ENCODE measurements at regions of chr18 and their contacts with region 1.

Region 1: GRCh38 chr18:50287441-50288347 is at the start of gene CXXC1:
- DNase-seq: peak; percentile 98
- H3K4me3 Mint-ChIP-seq: peak within 1 kb of the TSS; percentile 96
- H3K27ac Mint-ChIP-seq: peak within 1 kb of the TSS; percentile 94
- H3K4me1 Mint-ChIP-seq: peaks cover 29% of the 10 kb centered on the region
- H3K27me3 Mint-ChIP-seq: no peaks in the 10 kb centered on the region
- total RNA-seq, gene CXXC1: 102 and 105 TPM in 2 replicates

Region 2: GRCh38 chr18:49486953-49487710 is 800.6 kb before region 1 on chr18 and contains the start of gene C18orf32:
- intact Hi-C with region 1: loop called (anchors 1 kb)
- DNase-seq: peak; percentile 98
- H3K4me3 Mint-ChIP-seq: peak within 1 kb of the TSS; percentile 89
- H3K27ac Mint-ChIP-seq: peak within 1 kb of the TSS; percentile 94
- H3K4me1 Mint-ChIP-seq: peaks cover 42% of the 10 kb centered on the region
- H3K27me3 Mint-ChIP-seq: no peaks in the 10 kb centered on the region
- total RNA-seq, gene C18orf32: 20.4 and 26.1 TPM in 2 replicates

Region 3: DNA sequence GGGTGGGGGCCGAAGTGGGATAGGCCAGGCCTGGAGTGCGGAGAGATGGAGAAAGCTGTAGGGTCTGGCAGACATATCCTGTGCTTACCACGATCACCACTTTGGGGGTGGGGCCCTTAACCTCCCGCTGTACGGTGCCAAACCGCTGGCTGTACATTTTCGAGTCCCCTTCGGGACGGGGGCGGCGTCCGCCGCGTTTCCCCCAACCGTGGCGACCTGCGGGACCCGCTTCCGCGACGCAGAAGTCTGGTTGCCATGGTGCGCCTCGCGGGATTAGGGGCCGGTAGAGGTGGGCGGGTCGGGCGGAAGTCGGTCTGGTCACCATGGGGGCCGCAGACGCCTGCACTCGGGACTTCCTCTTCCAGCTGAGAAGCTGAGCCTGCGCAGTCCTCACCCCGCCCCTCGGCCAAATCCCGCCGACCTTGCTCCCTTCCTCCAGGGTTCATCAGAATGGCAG is 21.4 kb before region 1 on chr18 and contains the start of gene CFAP53:
- intact Hi-C with region 1: loop called (anchors 1 kb)
- DNase-seq: peak; percentile 95
- H3K4me3 Mint-ChIP-seq: peak within 1 kb of the TSS; percentile 83
- H3K27ac Mint-ChIP-seq: peak within 1 kb of the TSS; percentile 78
- H3K4me1 Mint-ChIP-seq: peaks cover 20% of the 10 kb centered on the region
- H3K27me3 Mint-ChIP-seq: peaks cover 6% of the 10 kb centered on the region
- total RNA-seq, gene CFAP53: 0.38 and 0.63 TPM in 2 replicates

Region 4: GRCh38 chr18:50307738-50308470 is 20.2 kb after region 1 on chr18:
- intact Hi-C with region 1: loop called (anchors 1 kb)
- DNase-seq: peak; percentile 97
- H3K4me3 Mint-ChIP-seq: peak overlapping the region; percentile 95
- H3K27ac Mint-ChIP-seq: peak overlapping the region; percentile 86
- H3K4me1 Mint-ChIP-seq: peaks cover 13% of the 10 kb centered on the region
- H3K27me3 Mint-ChIP-seq: peaks cover 25% of the 10 kb centered on the region

Region 5: DNA sequence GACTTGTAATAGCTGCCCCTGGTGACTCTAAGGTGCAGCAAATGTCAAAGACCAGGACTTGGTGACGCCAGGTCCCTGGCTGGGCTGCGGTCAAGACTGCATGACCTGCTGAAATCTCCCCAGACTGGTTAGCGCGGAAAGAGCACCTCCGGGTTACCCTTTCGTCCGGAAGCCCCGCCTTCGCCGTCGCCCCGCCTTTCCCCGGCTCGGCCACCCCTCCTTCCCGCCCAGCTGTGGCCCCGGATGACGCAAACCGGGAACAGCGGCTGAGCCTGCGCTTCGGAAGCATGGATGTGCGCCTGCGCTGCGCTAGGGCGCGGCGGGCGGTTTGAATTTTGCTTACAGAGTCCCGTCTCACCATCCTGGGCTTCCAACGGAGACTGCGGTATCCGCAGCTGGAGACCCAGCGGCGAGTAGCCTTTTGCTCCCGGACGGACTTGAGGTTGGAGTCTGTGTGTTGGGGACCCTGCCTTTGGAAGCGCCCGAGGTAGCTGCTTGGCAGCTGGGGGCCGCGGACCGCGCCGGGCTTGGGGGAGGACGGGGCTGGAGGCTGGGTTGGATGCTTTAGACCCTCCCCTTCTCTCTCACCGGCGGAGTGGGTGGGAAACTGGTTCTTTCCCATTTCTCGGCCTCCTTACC is 87.2 kb after region 1 on chr18 and contains the start of gene SKA1:
- intact Hi-C with region 1: loop called (anchors 1 kb)
- DNase-seq: peak; percentile 98
- H3K4me3 Mint-ChIP-seq: peak within 1 kb of the TSS; percentile 90
- H3K27ac Mint-ChIP-seq: peak within 1 kb of the TSS; percentile 89
- H3K4me1 Mint-ChIP-seq: peaks cover 15% of the 10 kb centered on the region
- H3K27me3 Mint-ChIP-seq: peaks cover 6% of the 10 kb centered on the region
- total RNA-seq, gene SKA1: 20.0 and 22.1 TPM in 2 replicates

Region 6: GRCh38 chr18:51029694-51030536 is 742.2 kb after region 1 on chr18 and contains the start of gene SMAD4:
- intact Hi-C with region 1: loop called (anchors 10 kb)
- DNase-seq: peak; percentile 99
- H3K4me3 Mint-ChIP-seq: peak within 1 kb of the TSS; percentile 97
- H3K27ac Mint-ChIP-seq: peak within 1 kb of the TSS; percentile 99
- H3K4me1 Mint-ChIP-seq: peaks cover 44% of the 10 kb centered on the region
- H3K27me3 Mint-ChIP-seq: no peaks in the 10 kb centered on the region
- total RNA-seq, gene SMAD4: 76.5 and 90.8 TPM in 2 replicates

Region 7: DNA sequence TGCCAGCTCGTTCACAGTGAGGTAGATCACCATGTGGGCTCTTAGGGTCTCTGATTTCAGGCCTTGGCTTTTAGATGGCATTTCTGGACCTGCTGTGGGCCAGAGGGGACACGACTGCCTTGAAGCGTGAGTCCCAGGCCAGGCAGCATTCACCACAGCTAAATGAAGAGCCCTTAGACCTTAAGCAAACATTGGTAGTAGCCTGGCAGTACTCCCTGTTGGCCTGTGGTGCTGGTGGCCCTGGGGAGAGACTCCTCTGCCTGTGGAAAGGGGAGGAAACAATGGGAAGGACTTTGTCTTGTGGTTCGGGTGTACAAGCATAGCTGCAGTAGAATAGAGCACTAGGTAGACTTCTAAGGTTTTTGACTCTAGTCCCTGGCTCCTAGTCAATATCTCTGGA is 1596.3 kb after region 1 on chr18:
- intact Hi-C with region 1: no loop called
- DNase-seq: no peak
- H3K4me3 Mint-ChIP-seq: no peak overlapping the region
- H3K27ac Mint-ChIP-seq: no peak overlapping the region
- H3K4me1 Mint-ChIP-seq: no peaks in the 10 kb centered on the region
- H3K27me3 Mint-ChIP-seq: no peaks in the 10 kb centered on the region